Cardiac septum (tissue), 1 donor: ENCODE measurements at regions of chr9 and their contacts with region 1.

Region 1: GRCh38 chr9:16329671-16330113 is 540.8 kb downstream of the BNC2 start:
- DNase-seq: no peak

Region 2: GRCh38 chr9:16241231-16241630 is 88.5 kb before region 1 on chr9:
- intact Hi-C with region 1: loop called (anchors 5 kb)
- DNase-seq: no peak

Region 3: DNA sequence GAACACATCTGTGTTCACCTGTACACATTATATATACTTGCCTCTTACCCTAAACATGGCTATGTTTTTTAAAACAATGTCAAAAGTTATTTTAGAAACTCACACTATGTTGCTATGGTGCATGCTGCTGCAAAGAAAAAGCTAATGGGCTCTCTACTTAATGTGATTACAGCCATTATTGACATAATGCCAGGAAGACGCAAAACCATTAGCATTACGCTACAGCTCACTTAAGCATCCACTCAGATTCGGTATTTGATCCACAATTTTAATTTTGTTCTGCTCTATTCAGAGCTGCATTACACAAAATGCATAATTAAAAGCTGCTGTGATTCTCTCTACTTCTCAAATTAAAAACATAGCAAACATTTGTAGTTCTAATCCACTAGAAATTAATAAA is 145.6 kb after region 1 on chr9:
- intact Hi-C with region 1: no loop called
- DNase-seq: no peak